ENCODE measurements at regions of chr19 and their contacts with region 1.

Region 1: GRCh38 chr19:35436477-35437405 is 11.3 kb upstream of the FFAR2 start:
- DNase-seq: peak in 3 of 9 experiments; percentile 21 to 49 (median 32)
- ATAC-seq: peak; percentile 55
- H3K4me3 ChIP-seq: no peak overlapping the region
- H3K4me3 Mint-ChIP-seq: no peak overlapping the region
- H3K27ac ChIP-seq: no peak overlapping the region
- H3K27ac Mint-ChIP-seq: no peak overlapping the region
- H3K4me1 ChIP-seq: peaks cover 12% of the 10 kb centered on the region
- H3K4me1 Mint-ChIP-seq: peaks cover 14% of the 10 kb centered on the region
- H3K27me3 ChIP-seq: no peaks in the 10 kb centered on the region
- H3K27me3 Mint-ChIP-seq: peaks cover 23% of the 10 kb centered on the region
- CTCF ChIP-seq: no peak

Region 2: GRCh38 chr19:35462476-35462953 is 25.8 kb after region 1 on chr19:
- CTCF ChIA-PET with region 1: no interaction called
- POLR2A ChIA-PET with region 1: no interaction called
- intact Hi-C with region 1: loop called in 1 of 2 experiments (anchors 2 kb)
- DNase-seq: peak; percentile 15 to 92 (median 65)
- ATAC-seq: peak; percentile 91
- H3K4me3 ChIP-seq: peak overlapping the region in 1 of 2 experiments; percentile 6
- H3K4me3 Mint-ChIP-seq: peak overlapping the region; percentile 73
- H3K27ac ChIP-seq: peak overlapping the region; percentile 40 to 91
- H3K27ac Mint-ChIP-seq: peak overlapping the region; percentile 95
- H3K4me1 ChIP-seq: peaks cover 28% of the 10 kb centered on the region
- H3K4me1 Mint-ChIP-seq: peaks cover 30% of the 10 kb centered on the region
- H3K27me3 ChIP-seq: no peaks in the 10 kb centered on the region
- H3K27me3 Mint-ChIP-seq: no peaks in the 10 kb centered on the region
- CTCF ChIP-seq: no peak